ENCODE measurements at regions of chr9 and their contacts with region 1.

Region 1: GRCh38 chr9:6757456-6758247 is at the start of gene KDM4C:
- DNase-seq: peak; percentile 97
- ATAC-seq: peak; percentile 96
- total RNA-seq, gene KDM4C: 14.2 TPM

Region 2: DNA sequence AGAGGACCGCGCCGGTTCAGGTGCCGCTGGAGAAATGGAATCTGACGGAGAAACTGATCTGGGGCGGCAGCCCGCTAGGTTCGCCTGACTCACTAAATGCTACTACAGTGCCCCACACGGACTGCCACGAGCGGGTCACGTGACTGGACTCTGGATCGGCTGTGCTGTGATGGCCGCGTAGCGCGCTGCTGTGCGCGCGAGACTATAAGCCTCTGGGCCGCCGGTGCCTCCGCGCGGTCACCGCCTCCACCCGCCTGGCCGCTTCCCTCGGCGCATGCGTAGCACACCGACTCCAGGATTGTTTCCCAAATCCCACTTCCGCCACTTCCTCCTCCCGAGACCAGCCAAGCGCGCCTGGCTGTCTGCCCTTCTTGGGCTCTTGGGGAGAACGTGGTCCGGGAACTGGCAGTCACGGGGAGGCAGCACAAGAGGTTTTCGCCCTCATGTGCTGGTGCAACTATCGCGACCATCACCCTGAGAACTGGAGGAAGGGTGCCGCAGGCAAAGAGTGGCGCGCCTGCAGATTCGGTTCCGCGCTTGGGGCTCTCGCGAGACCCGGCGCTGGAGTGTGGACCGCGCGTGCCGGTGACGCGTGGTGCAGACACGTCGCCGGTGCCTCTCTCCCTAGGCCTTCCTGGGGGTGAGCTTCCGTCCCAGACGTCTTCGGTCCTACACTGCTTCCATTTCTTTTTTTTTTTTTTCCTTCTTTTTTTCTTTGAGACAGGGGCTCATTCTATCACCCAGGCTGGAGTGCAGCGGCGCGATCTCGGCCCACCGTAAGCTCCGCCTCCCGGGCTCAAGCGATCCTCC is 76.3 kb before region 1 on chr9:
- intact Hi-C with region 1: loop called (anchors 5 kb)
- DNase-seq: peak; percentile 98
- ATAC-seq: peak; percentile 99

Region 3: DNA sequence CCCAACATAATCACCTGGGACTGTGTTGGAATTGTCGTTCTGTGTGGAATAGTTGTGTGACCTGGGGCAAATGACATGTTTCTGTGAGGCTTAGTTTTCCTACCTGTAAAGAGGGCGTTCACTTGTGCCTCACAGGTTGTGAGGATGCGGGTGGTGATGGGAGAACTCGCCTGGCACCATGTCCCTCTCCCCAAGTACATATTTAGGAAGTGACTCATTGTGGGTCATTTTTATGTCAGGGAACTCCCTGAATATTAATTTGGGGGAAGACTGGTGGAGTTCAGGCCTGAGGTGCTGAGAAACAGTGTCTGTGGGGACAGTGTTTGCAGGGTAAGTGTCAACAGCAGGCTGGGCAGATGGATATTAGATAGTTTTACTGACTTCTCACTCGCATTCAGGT is 144.8 kb after region 1 on chr9:
- intact Hi-C with region 1: no loop called
- DNase-seq: no peak
- ATAC-seq: no peak

Measured in Right ventricle myocardium superior (tissue), 1 donor.